ENCODE measurements at regions of chr3 and their contacts with region 1.

Region 1: DNA sequence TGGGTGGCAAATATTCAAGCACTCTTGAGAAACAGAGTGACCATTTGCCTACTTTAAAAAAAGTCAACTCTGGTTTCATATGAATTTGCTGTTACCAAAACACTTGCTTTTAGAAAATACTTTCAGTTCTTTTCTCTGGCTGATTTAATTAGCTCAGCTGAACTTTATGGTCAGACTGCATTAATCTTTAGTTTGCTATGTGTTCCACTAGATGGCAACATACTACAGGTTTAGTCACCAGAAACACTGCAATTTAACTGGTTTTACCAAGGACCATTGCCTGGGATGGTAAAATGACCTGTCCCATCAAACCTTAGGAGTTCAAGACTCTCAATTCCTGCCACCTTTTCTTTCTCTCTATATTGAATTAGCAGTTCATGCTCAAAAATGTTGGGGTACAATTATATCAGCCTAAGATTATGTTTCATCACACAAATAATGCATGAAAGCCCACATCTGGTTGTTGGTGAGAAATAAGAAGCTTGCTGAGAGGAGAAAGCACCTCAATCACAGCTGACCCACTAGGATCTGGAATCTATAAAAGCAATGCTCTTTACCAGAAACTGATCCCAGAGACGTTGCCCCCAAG is 14.2 kb downstream of the EIF4E3 start:
- DNase-seq: peak in 2 of 5 donors; percentile 41 to 45
- H3K4me3 ChIP-seq: no peak overlapping the region
- H3K4me3 Mint-ChIP-seq: peak overlapping the region in 2 of 7 donors; percentile 11 to 29
- H3K27ac ChIP-seq: no peak overlapping the region
- H3K27ac Mint-ChIP-seq: peak overlapping the region in 7 of 8 donors; percentile 30 to 85 (median 66)
- H3K4me1 ChIP-seq: peaks cover 46% of the 10 kb centered on the region
- H3K4me1 Mint-ChIP-seq: peaks cover 79 to 97% (median 95%) of the 10 kb centered on the region in 3 donors
- H3K27me3 ChIP-seq: no peaks in the 10 kb centered on the region
- H3K27me3 Mint-ChIP-seq: no peaks in the 10 kb centered on the region

Region 2: DNA sequence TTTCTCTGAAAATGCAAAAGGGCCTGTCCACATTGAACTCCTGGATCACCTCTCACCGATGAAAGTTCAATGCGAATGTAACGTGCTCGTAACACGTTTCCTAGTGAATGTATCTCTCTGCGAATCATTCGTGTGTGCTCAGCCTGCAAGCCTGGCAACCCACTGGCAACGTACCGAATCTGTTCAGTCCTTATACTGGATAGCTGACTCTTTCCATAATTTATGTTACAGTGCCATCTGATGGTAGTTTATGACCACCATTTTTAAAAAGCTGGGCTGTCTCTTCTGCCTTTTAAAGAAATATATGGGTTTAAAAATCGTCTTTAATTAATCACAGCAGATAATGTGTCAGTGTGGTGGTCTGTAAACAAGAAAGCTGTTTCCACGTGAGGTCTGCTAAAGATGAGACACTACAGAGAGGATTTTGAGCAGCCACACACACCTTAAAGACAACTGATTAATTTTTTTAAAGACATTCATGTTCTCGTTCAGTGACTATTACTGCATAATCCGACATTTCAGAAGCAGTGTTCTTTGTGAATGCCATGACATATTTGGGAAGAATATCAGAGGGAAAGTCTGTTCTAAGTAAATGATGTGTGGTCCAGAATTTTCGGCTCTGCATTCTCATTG is 58.1 kb before region 1 on chr3:
- CTCF ChIA-PET with region 1: no interaction called
- POLR2A ChIA-PET with region 1: no interaction called
- DNase-seq: peak in 1 of 5 donors; percentile 4
- H3K4me3 ChIP-seq: no peak overlapping the region
- H3K4me3 Mint-ChIP-seq: no peak overlapping the region
- H3K27ac ChIP-seq: no peak overlapping the region
- H3K27ac Mint-ChIP-seq: peak overlapping the region in 1 of 8 donors; percentile 34
- H3K4me1 ChIP-seq: no peaks in the 10 kb centered on the region
- H3K4me1 Mint-ChIP-seq: peaks cover 0 to 7% (median 5%) of the 10 kb centered on the region in 3 donors
- H3K27me3 ChIP-seq: no peaks in the 10 kb centered on the region
- H3K27me3 Mint-ChIP-seq: peaks cover 0 to 1% of the 10 kb centered on the region in 2 donors

Region 3: GRCh38 chr3:71728632-71729342 is 17.8 kb after region 1 on chr3:
- CTCF ChIA-PET with region 1: interaction called, 24 read pairs
- POLR2A ChIA-PET with region 1: no interaction called
- DNase-seq: peak in 3 of 5 donors; percentile 27 to 77 (median 51)
- H3K4me3 ChIP-seq: peak overlapping the region; percentile 2
- H3K4me3 Mint-ChIP-seq: peak overlapping the region in 2 of 7 donors; percentile 7 to 60
- H3K27ac ChIP-seq: peak overlapping the region; percentile 12
- H3K27ac Mint-ChIP-seq: peak overlapping the region in 7 of 8 donors; percentile 12 to 94 (median 81)
- H3K4me1 ChIP-seq: peaks cover 36% of the 10 kb centered on the region
- H3K4me1 Mint-ChIP-seq: peaks cover 49 to 58% (median 55%) of the 10 kb centered on the region in 3 donors
- H3K27me3 ChIP-seq: no peaks in the 10 kb centered on the region
- H3K27me3 Mint-ChIP-seq: peaks cover 0 to 1% of the 10 kb centered on the region in 2 donors

Region 4: DNA sequence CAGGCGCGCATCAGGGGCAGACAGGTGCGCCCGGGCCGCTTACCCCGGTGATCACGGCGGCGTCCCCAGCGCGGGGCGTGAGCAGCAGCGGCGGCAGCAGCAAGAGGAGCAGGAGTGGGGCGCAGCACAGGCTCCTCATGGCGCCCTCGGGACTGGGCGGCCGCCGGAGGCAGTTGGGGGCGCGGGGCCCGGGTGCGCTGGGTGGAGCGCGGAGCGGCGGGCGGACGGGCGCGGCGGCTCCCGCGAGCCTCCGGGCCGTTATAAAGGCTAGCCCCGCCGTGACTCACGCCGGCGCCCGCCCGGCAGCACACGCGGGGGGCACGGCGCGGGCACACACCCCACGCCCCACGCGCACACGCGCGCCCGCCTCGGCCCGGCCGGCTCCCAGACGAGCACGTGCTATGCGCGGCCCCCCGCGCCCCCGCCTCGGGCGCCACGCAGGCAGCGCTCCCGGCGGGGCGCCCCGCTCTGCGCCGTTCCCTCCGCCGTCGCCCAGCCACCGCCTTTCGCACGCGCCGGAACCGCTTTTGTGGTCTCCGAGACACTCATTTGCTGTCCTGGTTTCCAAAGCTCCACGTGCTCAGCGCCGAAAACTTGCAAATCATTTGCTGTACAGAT is 74.0 kb after region 1 on chr3 and contains the start of gene PROK2:
- CTCF ChIA-PET with region 1: no interaction called
- POLR2A ChIA-PET with region 1: no interaction called
- DNase-seq: peak; percentile 8 to 52 (median 8)
- H3K4me3 ChIP-seq: no peak within 1 kb of the TSS
- H3K4me3 Mint-ChIP-seq: peak within 1 kb of the TSS; percentile 68 to 91 (median 79)
- H3K27ac ChIP-seq: no peak within 1 kb of the TSS
- H3K27ac Mint-ChIP-seq: peak within 1 kb of the TSS in 3 of 8 donors; percentile 32 to 66 (median 61)
- H3K4me1 ChIP-seq: peaks cover 8% of the 10 kb centered on the region
- H3K4me1 Mint-ChIP-seq: peaks cover 18 to 26% (median 24%) of the 10 kb centered on the region in 3 donors
- H3K27me3 ChIP-seq: peaks cover 46% of the 10 kb centered on the region
- H3K27me3 Mint-ChIP-seq: peaks cover 43 to 63% of the 10 kb centered on the region in 2 donors
- total RNA-seq, gene PROK2: 0.28 to 0.33 TPM

Region 5: DNA sequence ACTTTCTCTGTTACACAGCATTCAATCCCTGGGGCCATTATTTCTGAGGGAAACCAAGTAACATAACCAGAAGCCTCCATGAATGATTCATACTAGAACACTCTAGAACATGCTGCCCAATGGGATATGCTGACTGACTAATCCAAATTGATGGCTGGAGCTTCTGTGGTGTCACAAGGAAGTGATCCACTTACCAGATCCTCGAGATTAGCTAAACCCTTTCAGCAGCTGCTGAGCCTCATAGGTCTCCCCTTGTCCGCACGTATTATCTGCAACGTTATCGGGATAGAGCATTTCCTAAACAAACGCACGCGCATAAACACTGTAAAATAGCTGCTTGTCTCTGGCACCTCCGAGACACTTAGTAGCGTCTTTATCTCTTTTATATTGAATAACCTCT is 135.2 kb after region 1 on chr3:
- CTCF ChIA-PET with region 1: no interaction called
- POLR2A ChIA-PET with region 1: no interaction called
- DNase-seq: no peak
- H3K4me3 ChIP-seq: no peak overlapping the region
- H3K4me3 Mint-ChIP-seq: no peak overlapping the region
- H3K27ac ChIP-seq: no peak overlapping the region
- H3K27ac Mint-ChIP-seq: no peak overlapping the region
- H3K4me1 ChIP-seq: no peaks in the 10 kb centered on the region
- H3K4me1 Mint-ChIP-seq: no peaks in the 10 kb centered on the region
- H3K27me3 ChIP-seq: no peaks in the 10 kb centered on the region
- H3K27me3 Mint-ChIP-seq: peaks cover 12 to 20% of the 10 kb centered on the region in 2 donors

Region 6: GRCh38 chr3:71859123-71859519 is 148.1 kb after region 1 on chr3:
- CTCF ChIA-PET with region 1: interaction called, 20 read pairs
- POLR2A ChIA-PET with region 1: no interaction called
- DNase-seq: peak in 3 of 5 donors; percentile 6 to 49 (median 27)
- H3K4me3 ChIP-seq: no peak overlapping the region
- H3K4me3 Mint-ChIP-seq: no peak overlapping the region
- H3K27ac ChIP-seq: no peak overlapping the region
- H3K27ac Mint-ChIP-seq: peak overlapping the region in 1 of 8 donors; percentile 21
- H3K4me1 ChIP-seq: no peaks in the 10 kb centered on the region
- H3K4me1 Mint-ChIP-seq: peaks cover 10 to 12% (median 11%) of the 10 kb centered on the region in 3 donors
- H3K27me3 ChIP-seq: no peaks in the 10 kb centered on the region
- H3K27me3 Mint-ChIP-seq: peaks cover 23 to 40% of the 10 kb centered on the region in 2 donors